Testis (tissue), 5 donors: ENCODE measurements at regions of chr1 and their contacts with region 1.

Region 1: DNA sequence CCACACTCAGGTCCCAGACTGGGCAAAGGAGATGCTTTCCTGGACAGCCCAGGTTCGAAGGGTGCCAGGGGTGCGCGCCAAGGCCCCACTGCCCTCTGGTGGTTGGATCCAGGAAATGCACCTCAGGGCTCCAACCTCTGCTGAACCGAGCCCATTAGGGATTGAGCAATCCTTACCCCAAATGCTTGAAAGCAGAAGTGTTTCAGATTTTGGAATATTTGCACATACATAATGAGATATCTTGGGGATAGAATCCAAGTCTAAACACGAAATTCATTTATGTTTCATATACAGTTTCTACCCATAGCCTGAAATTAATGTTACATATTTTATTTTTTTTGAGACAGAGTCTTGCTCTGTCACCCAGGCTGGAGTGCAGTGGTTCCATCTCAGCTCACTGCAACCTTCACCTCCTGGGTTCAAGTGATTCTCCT is 57.4 kb downstream of the SLC9A1 start:
- DNase-seq: peak; percentile 83
- H3K4me3 ChIP-seq: no peak overlapping the region
- H3K27ac ChIP-seq: no peak overlapping the region
- H3K4me1 ChIP-seq: peaks cover 25% of the 10 kb centered on the region
- H3K27me3 ChIP-seq: no peaks in the 10 kb centered on the region
- CTCF ChIP-seq: peak; percentile 90 to 94 (median 91)
- POLR2A ChIP-seq: no peak

Region 2: DNA sequence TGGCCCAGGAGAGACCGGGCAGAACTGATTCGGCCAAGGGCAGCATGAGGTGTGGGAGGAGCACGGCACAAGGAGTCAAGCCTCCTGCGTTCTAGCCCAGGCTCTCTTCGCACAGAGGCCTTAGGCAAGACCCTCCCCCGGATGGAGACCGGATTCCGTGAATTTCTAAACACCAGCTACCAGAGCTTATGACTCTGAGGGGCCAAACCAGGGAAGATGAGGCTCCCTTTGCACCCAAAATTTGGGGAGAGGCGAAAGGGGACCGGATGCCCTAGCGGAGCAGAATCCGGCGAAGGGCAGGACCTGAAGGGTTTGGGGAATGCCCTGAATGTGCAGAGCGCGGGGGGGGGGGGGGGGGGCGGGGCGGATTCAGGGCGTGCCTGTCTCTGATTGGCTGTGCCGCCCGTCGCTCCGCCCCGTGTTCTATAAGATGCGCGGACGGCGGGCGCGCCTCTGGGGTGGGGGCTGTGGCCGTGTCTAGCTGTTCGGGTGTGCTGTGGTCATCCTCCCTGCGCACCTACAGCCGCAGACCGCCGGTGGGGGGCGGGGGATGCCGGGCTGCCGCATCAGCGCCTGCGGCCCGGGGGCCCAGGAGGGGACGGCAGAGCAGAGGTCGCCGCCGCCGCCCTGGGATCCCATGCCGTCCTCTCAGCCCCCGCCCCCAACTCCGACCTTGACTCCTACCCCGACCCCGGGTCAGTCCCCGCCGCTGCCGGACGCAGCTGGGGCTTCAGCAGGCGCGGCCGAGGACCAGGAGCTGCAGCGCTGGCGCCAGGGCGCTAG is 104.1 kb before region 1 on chr1 and contains the start of gene TRNP1:
- intact Hi-C with region 1: loop called (anchors 10 kb)
- DNase-seq: peak; percentile 88
- H3K4me3 ChIP-seq: peak within 1 kb of the TSS; percentile 61 to 71
- H3K27ac ChIP-seq: peak within 1 kb of the TSS in 1 of 2 donors; percentile 24
- H3K4me1 ChIP-seq: peaks cover 23% of the 10 kb centered on the region
- H3K27me3 ChIP-seq: no peaks in the 10 kb centered on the region
- CTCF ChIP-seq: no peak
- POLR2A ChIP-seq: peak; percentile 35
- total RNA-seq, gene TRNP1: 5.7 to 7.7 TPM

Region 3: GRCh38 chr1:27044613-27045151 is 52.8 kb before region 1 on chr1:
- intact Hi-C with region 1: loop called (anchors 5 kb)
- DNase-seq: peak; percentile 95
- H3K4me3 ChIP-seq: no peak overlapping the region
- H3K27ac ChIP-seq: no peak overlapping the region
- H3K4me1 ChIP-seq: peaks cover 5% of the 10 kb centered on the region
- H3K27me3 ChIP-seq: no peaks in the 10 kb centered on the region
- CTCF ChIP-seq: peak; percentile 96 to 97 (median 97)
- POLR2A ChIP-seq: no peak